PC-9 (cell line): ENCODE measurements at regions of chr11 and their contacts with region 1.

Region 1: DNA sequence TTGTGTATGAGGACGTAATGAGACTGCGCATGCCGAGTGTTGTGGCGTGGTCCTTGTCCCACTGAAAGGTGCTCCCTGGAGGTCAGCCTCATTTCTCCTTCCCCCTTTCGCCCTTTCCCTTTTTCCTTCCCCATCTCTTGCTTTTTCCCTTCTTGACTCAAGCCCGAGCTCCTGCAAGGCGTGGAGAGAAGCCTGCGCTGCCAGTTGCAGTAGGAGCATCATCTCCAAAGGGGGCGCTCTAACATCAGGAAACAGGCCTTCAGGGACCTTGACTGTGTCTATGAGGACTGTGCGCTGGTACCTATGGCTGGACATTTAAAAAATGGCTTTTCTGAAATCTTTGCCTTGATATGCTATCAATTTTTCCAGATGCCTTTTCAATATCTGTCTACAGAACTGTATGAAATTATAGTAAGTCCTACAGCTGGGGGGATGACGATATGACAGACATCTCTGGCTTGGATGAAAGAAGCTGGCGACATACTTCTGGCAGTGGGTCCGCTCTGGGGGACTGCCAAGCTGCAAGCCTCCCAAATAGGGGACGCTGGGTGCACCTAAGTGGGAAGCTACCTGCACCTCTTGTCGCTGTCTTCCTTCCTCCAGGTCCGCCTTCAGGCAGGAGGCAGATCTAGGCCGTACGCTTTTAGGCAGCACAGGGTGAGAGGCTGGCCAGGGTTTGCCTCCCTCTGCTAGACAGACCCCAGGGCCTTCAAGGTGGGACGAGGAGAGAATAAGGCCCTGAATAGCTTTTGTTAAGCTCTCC is 96.5 kb downstream of the NXPE2 start:
- DNase-seq: peak in 1 of 2 experiments; percentile 13
- H3K4me3 ChIP-seq: no peak overlapping the region
- H3K27ac ChIP-seq: no peak overlapping the region
- H3K4me1 ChIP-seq: no peaks in the 10 kb centered on the region
- H3K27me3 ChIP-seq: peaks cover 47% of the 10 kb centered on the region; the same call in 1 of the 2 replicates
- CTCF ChIP-seq: peak; percentile 78

Region 2: GRCh38 chr11:116742104-116742503 is 1967.3 kb after region 1 on chr11:
- CTCF ChIA-PET with region 1: no interaction called
- POLR2A ChIA-PET with region 1: no interaction called
- intact Hi-C with region 1: loop called (anchors 10 kb)
- DNase-seq: no peak
- H3K4me3 ChIP-seq: no peak overlapping the region
- H3K27ac ChIP-seq: no peak overlapping the region
- H3K4me1 ChIP-seq: no peaks in the 10 kb centered on the region
- H3K27me3 ChIP-seq: no peaks in the 10 kb centered on the region
- CTCF ChIP-seq: no peak